ENCODE measurements at regions of chr1 and their contacts with region 1.

Region 1: GRCh38 chr1:198681831-198682759 is 43.3 kb downstream of the PTPRC start:
- DNase-seq: peak; percentile 98
- H3K4me3 ChIP-seq: peak overlapping the region; percentile 14
- H3K27ac ChIP-seq: peak overlapping the region; percentile 94
- H3K4me1 ChIP-seq: peaks cover 70% of the 10 kb centered on the region
- H3K27me3 ChIP-seq: no peaks in the 10 kb centered on the region

Region 2: GRCh38 chr1:197521118-197521739 is 1160.9 kb before region 1 on chr1:
- in situ Hi-C with region 1: loop called (anchors 25 kb)
- DNase-seq: peak; percentile 65
- H3K4me3 ChIP-seq: no peak overlapping the region
- H3K27ac ChIP-seq: no peak overlapping the region
- H3K4me1 ChIP-seq: no peaks in the 10 kb centered on the region
- H3K27me3 ChIP-seq: no peaks in the 10 kb centered on the region

Region 3: GRCh38 chr1:197902454-197903195 is 779.5 kb before region 1 on chr1 and contains the start of gene C1orf53:
- in situ Hi-C with region 1: loop called (anchors 25 kb)
- DNase-seq: peak; percentile 97
- H3K4me3 ChIP-seq: peak within 1 kb of the TSS; percentile 90
- H3K27ac ChIP-seq: peak within 1 kb of the TSS; percentile 77
- H3K4me1 ChIP-seq: peaks cover 11% of the 10 kb centered on the region
- H3K27me3 ChIP-seq: no peaks in the 10 kb centered on the region
- total RNA-seq, gene C1orf53: 17.3 and 90.2 TPM in 2 replicates

Region 4: DNA sequence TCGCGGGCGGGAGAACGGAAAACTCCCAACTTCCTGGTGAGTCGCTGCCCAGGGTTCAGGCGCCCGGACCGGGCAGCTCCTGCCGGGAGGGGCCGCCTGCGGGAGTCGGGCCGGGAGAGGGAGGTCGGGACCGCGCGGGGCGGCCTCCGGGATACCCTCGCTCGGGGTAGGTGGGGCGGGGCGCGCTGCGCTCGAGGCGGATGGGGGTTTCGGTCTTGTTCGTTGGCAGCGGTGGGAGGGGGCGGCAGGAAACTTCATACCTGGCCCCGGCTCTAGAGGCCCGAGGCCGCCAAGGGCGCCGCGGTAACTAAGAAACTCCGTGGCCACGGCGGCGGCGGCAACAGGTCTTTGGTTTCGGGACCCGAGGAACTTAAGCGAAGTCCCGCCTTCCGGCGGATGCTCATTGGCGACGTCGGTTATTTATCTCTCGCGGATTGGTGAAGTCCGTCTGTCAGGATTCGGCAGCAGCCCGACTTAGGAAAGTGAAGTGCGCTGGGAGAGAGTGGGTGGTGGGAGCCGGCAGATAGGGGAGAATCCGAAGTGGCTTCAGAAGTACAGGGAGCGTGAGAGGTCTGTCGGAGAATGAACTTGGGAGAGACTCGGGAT is 524.8 kb before region 1 on chr1:
- in situ Hi-C with region 1: loop called (anchors 25 kb)
- DNase-seq: peak; percentile 96
- H3K4me3 ChIP-seq: peak overlapping the region; percentile 88
- H3K27ac ChIP-seq: peak overlapping the region; percentile 74
- H3K4me1 ChIP-seq: peaks cover 52% of the 10 kb centered on the region
- H3K27me3 ChIP-seq: no peaks in the 10 kb centered on the region

Region 5: GRCh38 chr1:198497346-198498102 is 184.6 kb before region 1 on chr1:
- in situ Hi-C with region 1: loop called (anchors 10 kb)
- DNase-seq: peak; percentile 86
- H3K4me3 ChIP-seq: no peak overlapping the region
- H3K27ac ChIP-seq: peak overlapping the region; percentile 74
- H3K4me1 ChIP-seq: peaks cover 66% of the 10 kb centered on the region
- H3K27me3 ChIP-seq: no peaks in the 10 kb centered on the region